Activated CD4-positive, alpha-beta memory T cell treated with anti-CD3 and anti-CD28 coated beads for 36 hours (primary cell): ENCODE measurements at regions of chr2 and their contacts with region 1.

Region 1: GRCh38 chr2:241877989-241878970 is 8.8 kb downstream of the RTP5 start:
- DNase-seq: peak; percentile 82
- H3K4me3 Mint-ChIP-seq: no peak overlapping the region
- H3K27ac Mint-ChIP-seq: no peak overlapping the region
- H3K4me1 Mint-ChIP-seq: peaks cover 28% of the 10 kb centered on the region
- H3K27me3 Mint-ChIP-seq: no peaks in the 10 kb centered on the region

Region 2: DNA sequence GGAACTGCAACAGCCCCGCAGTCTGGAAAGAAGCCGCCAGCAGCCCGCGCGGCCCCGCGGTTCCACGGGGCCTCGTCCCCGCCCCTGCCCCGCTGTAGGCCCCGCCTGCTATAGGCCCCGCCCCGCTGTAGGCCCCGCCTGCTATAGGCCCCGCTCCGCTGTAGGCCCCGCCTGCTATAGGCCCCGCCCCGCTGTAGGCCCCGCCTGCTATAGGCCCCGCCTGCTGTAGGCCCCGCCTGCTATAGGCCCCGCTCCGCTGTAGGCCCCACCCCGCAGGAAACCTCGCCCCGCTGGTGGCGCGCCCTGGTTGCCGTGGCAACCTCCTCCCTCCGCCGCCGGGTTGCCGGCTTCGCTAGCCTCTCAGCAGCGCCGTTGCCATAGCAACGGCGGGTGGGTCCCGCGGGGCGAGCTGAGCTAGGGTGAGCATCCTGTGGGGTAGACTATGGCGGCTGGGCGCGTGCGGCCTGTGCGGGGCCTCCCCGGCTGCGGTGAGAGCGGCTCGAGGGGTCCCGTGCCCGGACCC is 1046.0 kb before region 1 on chr2:
- CTCF ChIA-PET with region 1: no interaction called
- POLR2A ChIA-PET with region 1: no interaction called
- intact Hi-C with region 1: loop called (anchors 5 kb)
- DNase-seq: peak; percentile 97
- H3K4me3 Mint-ChIP-seq: peak overlapping the region; percentile 68
- H3K27ac Mint-ChIP-seq: no peak overlapping the region
- H3K4me1 Mint-ChIP-seq: no peaks in the 10 kb centered on the region
- H3K27me3 Mint-ChIP-seq: peaks cover 15% of the 10 kb centered on the region

Region 3: DNA sequence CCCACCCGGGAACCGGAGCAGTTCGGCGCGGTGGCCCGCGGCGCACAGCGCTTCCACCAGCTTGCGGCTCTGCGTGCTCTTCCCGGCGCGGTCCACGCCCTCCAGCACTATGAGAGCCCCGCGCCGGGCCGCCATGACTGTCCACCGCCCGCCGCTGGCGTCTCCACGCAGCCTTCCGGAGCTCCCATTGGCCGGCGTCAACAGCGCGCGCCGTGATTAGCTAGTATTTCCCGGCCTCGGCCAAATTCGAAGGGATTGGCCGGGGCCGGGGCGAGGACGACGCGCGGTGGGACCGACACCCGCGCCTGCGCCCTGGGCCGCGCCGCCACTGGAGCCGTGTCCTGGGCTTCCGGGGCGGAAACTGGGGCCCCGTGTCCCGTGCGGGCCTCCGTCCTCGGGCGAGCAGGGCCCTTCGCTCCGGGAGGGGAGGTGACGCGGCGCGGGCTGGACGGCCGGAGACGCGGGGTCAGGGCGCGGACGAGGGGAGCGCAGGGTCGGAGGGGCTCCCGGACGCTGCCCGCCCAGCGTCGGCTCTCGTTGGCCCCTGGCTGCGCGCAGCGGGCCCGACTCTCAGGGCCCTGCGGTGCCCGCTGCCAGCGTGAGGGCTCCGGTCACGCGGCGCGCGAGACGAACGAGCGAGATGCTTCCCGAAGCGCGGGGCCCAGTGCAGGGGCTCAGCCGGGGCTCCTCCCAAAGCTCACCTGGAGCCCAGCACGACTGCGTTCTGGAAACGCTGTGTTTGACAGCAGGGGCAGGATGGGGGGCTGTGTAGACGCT is 191.4 kb before region 1 on chr2 and contains the start of gene DTYMK:
- CTCF ChIA-PET with region 1: interaction called, 9 read pairs
- POLR2A ChIA-PET with region 1: interaction called, 8 read pairs
- intact Hi-C with region 1: loop called (anchors 1 kb)
- DNase-seq: peak; percentile 97
- H3K4me3 Mint-ChIP-seq: peak within 1 kb of the TSS; percentile 98
- H3K27ac Mint-ChIP-seq: peak within 1 kb of the TSS; percentile 93
- H3K4me1 Mint-ChIP-seq: peaks cover 27% of the 10 kb centered on the region
- H3K27me3 Mint-ChIP-seq: no peaks in the 10 kb centered on the region
- total RNA-seq, gene DTYMK: 85.9 to 88.7 TPM

Region 4: DNA sequence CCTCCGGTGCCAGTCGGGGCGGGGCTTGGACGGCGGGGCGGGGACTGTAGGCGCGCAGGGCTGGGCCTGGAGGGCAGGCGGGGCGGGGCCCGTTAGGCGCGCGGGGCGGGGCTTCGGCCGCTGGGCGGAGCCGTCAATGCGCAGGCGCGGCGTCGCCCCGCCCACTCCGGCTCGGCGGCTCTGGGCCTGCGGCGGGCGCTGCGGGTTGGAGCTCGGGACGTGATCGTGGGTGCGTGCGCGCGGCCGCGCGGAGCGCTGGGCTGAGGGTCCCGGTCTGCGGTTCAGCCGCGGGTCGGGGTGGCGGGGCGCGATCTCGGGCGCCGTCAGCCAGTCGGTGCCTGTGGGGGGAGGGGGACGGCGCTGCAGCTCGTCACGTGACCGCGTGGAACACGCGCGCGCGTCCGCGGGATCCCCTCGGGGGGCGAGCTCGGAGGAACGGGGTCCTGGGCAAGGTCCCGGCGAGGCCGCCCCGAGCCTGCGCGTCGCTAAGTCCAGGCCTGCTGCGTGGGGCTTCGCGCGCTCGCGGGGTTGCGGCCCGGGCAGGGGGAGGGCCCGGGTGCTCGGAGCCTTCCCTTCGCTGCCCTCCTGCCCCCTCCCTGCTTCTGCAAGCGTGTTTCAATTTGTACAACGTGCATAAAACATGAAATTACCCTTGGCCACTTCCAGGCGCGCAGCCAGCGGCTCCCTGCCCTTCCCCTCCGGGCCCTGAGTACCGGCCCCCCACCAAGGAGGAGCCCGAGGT is 143.6 kb before region 1 on chr2 and contains the start of gene D2HGDH:
- CTCF ChIA-PET with region 1: interaction called, 30 read pairs
- POLR2A ChIA-PET with region 1: no interaction called
- intact Hi-C with region 1: loop called (anchors 1 kb)
- DNase-seq: peak; percentile 95
- H3K4me3 Mint-ChIP-seq: peak within 1 kb of the TSS; percentile 81
- H3K27ac Mint-ChIP-seq: peak within 1 kb of the TSS; percentile 70
- H3K4me1 Mint-ChIP-seq: peaks cover 49% of the 10 kb centered on the region
- H3K27me3 Mint-ChIP-seq: no peaks in the 10 kb centered on the region
- total RNA-seq, gene D2HGDH: 27.5 to 28.2 TPM

Region 5: GRCh38 chr2:241803387-241804325 is 74.6 kb before region 1 on chr2:
- CTCF ChIA-PET with region 1: interaction called, 12 read pairs
- POLR2A ChIA-PET with region 1: no interaction called
- intact Hi-C with region 1: no loop called
- DNase-seq: peak; percentile 58
- H3K4me3 Mint-ChIP-seq: peak overlapping the region; percentile 63
- H3K27ac Mint-ChIP-seq: no peak overlapping the region
- H3K4me1 Mint-ChIP-seq: peaks cover 9% of the 10 kb centered on the region
- H3K27me3 Mint-ChIP-seq: peaks cover 6% of the 10 kb centered on the region

Region 6: DNA sequence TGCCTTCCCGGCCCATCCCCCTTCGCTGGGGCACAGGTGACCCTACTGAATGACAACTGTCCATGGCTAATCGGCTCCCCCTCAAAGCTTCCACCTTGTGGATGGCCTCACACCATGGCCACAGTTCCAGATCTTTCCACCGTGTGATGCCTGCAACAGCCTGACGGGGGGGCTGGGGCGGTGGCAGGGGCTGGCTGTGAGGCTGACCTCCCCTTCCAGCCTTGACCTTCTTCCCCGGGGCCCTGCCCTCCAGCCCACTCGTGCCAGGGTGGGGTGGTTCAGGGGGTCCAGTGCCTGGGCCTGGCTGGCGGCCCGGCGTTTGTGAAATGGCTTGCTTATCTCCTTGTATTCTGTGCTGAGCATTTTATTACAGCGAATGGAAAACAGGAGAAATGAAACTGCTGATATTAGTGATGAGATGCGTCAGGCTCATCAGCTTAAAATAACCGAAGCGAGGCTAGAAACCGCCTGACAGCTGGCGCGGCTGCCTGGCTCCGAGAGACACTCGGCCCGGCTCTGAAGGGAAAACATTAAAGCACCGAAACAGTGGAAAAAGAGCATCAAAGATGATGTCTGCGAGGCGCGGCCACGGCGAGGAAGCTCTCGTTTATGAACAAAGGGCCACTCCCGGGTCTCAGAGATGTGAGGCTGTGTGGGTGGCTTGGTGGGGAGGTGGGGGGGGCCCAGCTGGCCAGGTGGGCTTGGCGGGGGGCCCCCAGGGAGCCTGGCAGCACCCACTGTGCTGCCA is 18.7 kb before region 1 on chr2:
- CTCF ChIA-PET with region 1: interaction called, 14 read pairs
- POLR2A ChIA-PET with region 1: interaction called, 4 read pairs
- intact Hi-C with region 1: no loop called
- DNase-seq: peak; percentile 85
- H3K4me3 Mint-ChIP-seq: peak overlapping the region; percentile 90
- H3K27ac Mint-ChIP-seq: peak overlapping the region; percentile 95
- H3K4me1 Mint-ChIP-seq: peaks cover 57% of the 10 kb centered on the region
- H3K27me3 Mint-ChIP-seq: peaks cover 4% of the 10 kb centered on the region